Endothelial cell of umbilical vein (primary cell): ENCODE measurements at regions of chr16 and their contacts with region 1.

Region 1: DNA sequence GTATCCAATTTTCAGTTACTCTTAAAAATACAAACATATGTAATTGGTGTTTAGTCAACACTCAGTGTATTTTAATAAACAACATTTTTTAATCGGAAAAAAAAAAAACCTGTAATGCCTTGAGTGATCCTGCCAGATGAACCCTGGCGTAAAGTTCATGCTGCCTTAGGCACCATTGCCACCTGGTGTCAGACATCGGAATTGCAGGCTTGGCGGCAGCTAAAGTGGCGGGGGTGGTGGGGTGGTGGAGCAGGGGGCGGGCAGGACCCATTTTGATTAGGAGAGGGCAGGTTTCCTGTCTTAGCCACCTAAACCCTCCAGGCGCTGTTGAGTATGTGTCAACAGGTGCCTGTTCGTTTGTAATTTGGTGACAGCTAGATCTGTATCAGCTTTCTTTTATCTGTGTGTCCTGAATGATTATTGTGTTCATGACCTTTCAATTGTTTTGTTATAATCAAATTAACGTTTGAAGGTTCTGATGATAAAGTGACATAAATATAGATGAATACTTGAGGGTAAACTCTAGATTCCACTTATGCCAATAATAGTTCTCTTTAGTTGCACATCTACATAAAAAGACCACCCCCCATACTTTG is 588.7 kb downstream of the CDH13 start:
- DNase-seq: peak; percentile 48
- H3K4me3 ChIP-seq: no peak overlapping the region
- H3K27ac ChIP-seq: no peak overlapping the region
- H3K4me1 ChIP-seq: no peaks in the 10 kb centered on the region
- H3K27me3 ChIP-seq: no peaks in the 10 kb centered on the region
- CTCF ChIP-seq: peak; percentile 74 to 78
- POLR2A ChIP-seq: no peak

Region 2: GRCh38 chr16:82456683-82457082 is 758.8 kb before region 1 on chr16:
- CTCF ChIA-PET with region 1: interaction called, 28 read pairs
- POLR2A ChIA-PET with region 1: no interaction called
- dilution Hi-C with region 1: no loop called
- intact Hi-C with region 1: loop called (anchors 1 kb)
- DNase-seq: peak; percentile 62
- H3K4me3 ChIP-seq: no peak overlapping the region
- H3K27ac ChIP-seq: no peak overlapping the region
- H3K4me1 ChIP-seq: no peaks in the 10 kb centered on the region
- H3K27me3 ChIP-seq: peaks cover 0 to 8% of the 10 kb centered on the region in 2 experiments
- CTCF ChIP-seq: peak; percentile 80 to 89
- POLR2A ChIP-seq: no peak

Region 3: DNA sequence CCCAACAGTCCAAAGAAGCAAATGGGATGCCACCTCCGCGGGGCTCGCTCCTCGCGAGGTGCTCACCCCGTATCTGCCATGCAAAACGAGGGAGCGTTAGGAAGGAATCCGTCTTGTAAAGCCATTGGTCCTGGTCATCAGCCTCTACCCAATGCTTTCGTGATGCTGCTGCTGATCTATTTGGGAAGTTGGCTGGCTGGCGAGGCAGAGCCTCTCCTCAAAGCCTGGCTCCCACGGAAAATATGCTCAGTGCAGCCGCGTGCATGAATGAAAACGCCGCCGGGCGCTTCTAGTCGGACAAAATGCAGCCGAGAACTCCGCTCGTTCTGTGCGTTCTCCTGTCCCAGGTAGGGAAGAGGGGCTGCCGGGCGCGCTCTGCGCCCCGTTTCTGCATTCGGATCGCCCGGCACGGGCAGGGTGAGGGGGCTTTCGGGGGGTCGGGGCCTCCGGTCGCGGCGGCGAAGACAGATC is 588.7 kb before region 1 on chr16 and contains the start of gene CDH13:
- CTCF ChIA-PET with region 1: interaction called, 11 read pairs
- POLR2A ChIA-PET with region 1: no interaction called
- dilution Hi-C with region 1: no loop called
- intact Hi-C with region 1: loop called (anchors 5 kb)
- DNase-seq: peak; percentile 62
- H3K4me3 ChIP-seq: peak within 1 kb of the TSS; percentile 52 to 82 (median 66)
- H3K27ac ChIP-seq: peak within 1 kb of the TSS; percentile 96
- H3K4me1 ChIP-seq: peaks cover 46% of the 10 kb centered on the region
- H3K27me3 ChIP-seq: peaks cover 0 to 2% of the 10 kb centered on the region in 2 experiments
- CTCF ChIP-seq: no peak
- POLR2A ChIP-seq: no peak
- total RNA-seq, gene CDH13: 98.5 and 124 TPM in 2 replicates

Region 4: DNA sequence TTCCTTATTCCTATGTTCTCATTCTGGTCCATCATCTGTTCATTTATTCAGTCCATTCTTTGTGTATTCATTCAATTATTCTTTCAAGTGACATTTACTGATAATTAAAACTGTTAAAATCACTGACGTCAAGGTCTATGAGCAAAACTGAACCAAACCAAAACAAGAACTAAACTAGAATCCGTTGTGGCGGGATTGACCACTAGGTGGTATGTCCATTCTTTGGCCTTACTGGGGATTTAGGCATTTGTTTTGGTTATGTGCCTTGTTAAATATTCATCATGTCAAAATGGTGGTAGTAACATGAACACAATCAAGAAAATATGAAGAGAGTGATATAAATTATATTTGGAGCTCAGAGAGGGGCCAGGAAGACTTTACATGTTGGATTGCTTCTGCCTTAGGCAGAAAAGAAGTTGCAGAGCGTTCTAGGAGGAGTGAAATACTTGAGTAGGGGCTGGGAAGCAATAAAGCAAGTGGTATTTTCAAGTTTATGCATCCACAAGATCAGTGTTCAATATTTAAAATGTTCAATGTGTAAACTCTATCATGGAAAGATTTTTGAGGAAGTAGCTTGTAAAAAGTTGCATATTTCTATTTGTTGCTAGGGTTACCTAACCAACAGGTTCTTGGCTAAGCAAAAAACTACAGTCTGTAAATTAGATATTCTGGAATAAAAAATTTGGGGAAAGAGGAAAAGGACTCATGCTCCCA is 459.8 kb before region 1 on chr16:
- CTCF ChIA-PET with region 1: interaction called, 4 read pairs
- POLR2A ChIA-PET with region 1: no interaction called
- dilution Hi-C with region 1: no loop called
- intact Hi-C with region 1: loop called (anchors 2 kb)
- DNase-seq: no peak
- H3K4me3 ChIP-seq: no peak overlapping the region
- H3K27ac ChIP-seq: peak overlapping the region; percentile 92
- H3K4me1 ChIP-seq: peaks cover 59% of the 10 kb centered on the region
- H3K27me3 ChIP-seq: no peaks in the 10 kb centered on the region
- CTCF ChIP-seq: peak in 1 of 2 donors; percentile 7
- POLR2A ChIP-seq: no peak

Region 5: DNA sequence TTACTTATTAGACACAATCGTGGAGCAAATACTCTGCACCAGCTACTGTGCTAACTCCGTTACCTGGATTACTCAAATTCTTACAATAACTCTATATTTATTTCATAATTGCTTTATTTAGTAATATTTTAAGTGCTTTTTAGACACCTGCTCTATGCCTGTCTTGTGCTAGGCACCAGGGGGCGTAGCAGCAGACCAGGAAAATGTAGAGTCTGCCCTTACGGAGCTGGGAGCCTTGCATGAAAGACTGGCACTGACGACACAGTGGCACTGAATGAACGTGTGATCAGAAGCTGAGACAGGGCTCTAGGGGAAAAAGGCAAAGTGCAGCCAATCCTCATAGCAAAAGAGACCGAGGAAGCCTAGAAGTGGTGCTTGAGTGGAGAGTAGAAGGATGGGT is 102.2 kb before region 1 on chr16:
- CTCF ChIA-PET with region 1: interaction called, 49 read pairs
- POLR2A ChIA-PET with region 1: no interaction called
- dilution Hi-C with region 1: no loop called
- intact Hi-C with region 1: loop called (anchors 1 kb)
- DNase-seq: peak; percentile 39
- H3K4me3 ChIP-seq: no peak overlapping the region
- H3K27ac ChIP-seq: no peak overlapping the region
- H3K4me1 ChIP-seq: no peaks in the 10 kb centered on the region
- H3K27me3 ChIP-seq: no peaks in the 10 kb centered on the region
- CTCF ChIP-seq: peak; percentile 52 to 58
- POLR2A ChIP-seq: no peak

Region 6: DNA sequence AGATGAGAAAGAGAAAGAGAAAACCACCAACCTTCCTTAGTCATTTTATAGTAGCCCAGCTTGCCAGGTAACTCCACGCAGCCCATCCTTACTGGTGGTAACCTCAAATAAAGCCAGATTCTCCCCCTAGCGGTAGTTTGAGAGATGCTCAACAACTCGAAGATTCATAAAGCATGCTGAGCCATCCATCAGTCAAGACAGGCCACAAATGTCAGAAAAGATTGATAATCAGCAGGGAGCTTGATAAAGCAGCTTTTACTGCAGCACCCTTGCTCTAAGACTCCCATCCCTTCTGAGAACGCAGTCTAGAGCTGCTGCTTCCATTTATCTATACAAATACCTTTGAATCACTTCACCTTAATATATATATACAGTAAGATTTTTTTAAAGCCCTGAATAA is 140.8 kb after region 1 on chr16:
- CTCF ChIA-PET with region 1: interaction called, 11 read pairs
- POLR2A ChIA-PET with region 1: no interaction called
- dilution Hi-C with region 1: no loop called
- intact Hi-C with region 1: loop called (anchors 5 kb)
- DNase-seq: peak; percentile 70
- H3K4me3 ChIP-seq: no peak overlapping the region
- H3K27ac ChIP-seq: no peak overlapping the region
- H3K4me1 ChIP-seq: no peaks in the 10 kb centered on the region
- H3K27me3 ChIP-seq: no peaks in the 10 kb centered on the region
- CTCF ChIP-seq: peak; percentile 72 to 74
- POLR2A ChIP-seq: no peak